Activated naive CD4-positive, alpha-beta T cell treated with anti-CD3 and anti-CD28 coated beads for 36 hours (primary cell): ENCODE measurements at regions of chr6 and their contacts with region 1.

Region 1: GRCh38 chr6:11172501-11173332 is 59.8 kb downstream of the NEDD9 start:
- DNase-seq: peak; percentile 84
- H3K4me3 Mint-ChIP-seq: no peak overlapping the region
- H3K27ac Mint-ChIP-seq: no peak overlapping the region
- H3K4me1 Mint-ChIP-seq: peaks cover 11% of the 10 kb centered on the region
- H3K27me3 Mint-ChIP-seq: no peaks in the 10 kb centered on the region

Region 2: DNA sequence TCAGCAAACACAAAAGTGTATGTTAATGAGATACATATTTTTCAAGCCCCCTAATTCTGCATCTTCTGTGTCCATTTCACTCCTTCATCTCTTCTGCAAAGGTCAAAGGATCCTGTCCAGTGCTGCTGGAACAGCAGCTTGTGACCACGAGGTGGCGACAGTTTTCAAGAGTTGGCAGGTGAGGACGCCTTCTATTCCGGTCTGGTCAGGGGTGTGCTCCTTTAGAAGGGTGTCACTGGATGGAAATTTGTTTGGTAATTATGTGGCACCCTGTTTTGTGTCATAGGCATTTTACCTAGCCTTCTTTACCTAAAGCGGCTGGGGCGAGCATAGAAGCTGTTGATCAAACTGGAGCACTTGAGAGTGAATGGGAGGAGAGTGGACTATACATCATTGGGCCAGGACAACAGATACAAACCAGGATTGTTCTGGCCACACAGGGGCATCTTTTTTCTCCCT is 28.3 kb before region 1 on chr6:
- CTCF ChIA-PET with region 1: interaction called, 5 read pairs
- intact Hi-C with region 1: loop called (anchors 1 kb)
- DNase-seq: peak; percentile 89
- H3K4me3 Mint-ChIP-seq: no peak overlapping the region
- H3K27ac Mint-ChIP-seq: no peak overlapping the region
- H3K4me1 Mint-ChIP-seq: peaks cover 7% of the 10 kb centered on the region
- H3K27me3 Mint-ChIP-seq: no peaks in the 10 kb centered on the region

Region 3: DNA sequence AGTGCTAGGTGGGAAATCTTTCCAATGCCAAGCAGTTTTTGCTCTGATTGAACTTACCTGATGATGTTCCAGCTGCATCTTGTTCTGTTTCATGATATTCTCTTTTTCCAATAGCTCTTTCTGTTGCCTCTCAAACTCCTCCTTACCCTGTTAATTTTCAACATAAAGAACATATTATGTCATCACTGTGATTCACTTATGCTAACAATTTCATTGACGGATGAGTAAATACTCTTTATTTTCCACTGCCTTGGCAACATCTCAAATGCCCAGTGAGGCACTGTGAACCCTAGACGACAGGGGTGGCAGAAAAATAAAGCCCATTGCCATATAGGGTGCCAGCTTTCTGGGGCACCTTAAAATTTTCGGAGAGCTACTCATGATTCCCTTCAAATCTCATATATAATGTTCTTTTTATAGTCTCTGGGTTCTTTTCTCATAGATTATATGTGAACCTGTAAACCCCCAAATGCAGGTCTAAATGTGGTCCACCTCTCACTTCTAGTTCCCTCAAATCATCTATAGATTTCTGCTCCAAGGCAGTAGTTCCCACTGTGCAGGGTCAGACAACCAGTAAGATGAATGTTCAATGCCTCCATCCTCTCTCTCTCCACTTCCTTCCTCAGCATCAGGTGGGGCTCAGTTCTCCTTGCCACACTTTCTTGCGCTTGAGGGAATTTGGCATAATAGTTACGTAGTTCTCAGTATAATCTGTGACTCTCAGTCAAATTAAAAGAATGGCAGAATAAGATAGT is 15.6 kb after region 1 on chr6:
- CTCF ChIA-PET with region 1: interaction called, 10 read pairs
- intact Hi-C with region 1: no loop called
- DNase-seq: no peak
- H3K4me3 Mint-ChIP-seq: no peak overlapping the region
- H3K27ac Mint-ChIP-seq: no peak overlapping the region
- H3K4me1 Mint-ChIP-seq: no peaks in the 10 kb centered on the region
- H3K27me3 Mint-ChIP-seq: no peaks in the 10 kb centered on the region

Region 4: DNA sequence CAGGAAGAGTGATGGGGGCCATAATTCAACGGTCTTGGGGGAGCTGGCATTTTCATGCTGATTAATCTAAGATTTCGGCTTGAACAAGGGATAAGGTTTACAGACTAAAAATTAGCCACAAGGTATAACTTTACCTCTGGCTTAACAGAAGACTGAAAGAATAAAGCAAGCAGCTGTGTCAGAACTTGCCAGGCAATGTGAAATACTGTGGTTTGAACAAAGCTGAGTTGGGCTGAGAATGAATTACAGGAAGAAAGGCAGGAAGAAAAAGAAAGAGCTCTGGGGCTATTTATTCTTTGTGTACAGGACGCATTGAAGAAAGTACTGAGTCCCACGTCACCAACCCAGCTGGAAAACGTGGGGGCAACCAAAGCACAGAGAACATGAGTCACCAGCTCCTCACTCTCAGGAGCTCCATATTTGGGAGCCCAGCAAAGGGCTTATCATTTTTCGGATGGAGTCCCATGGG is 181.2 kb after region 1 on chr6:
- CTCF ChIA-PET with region 1: no interaction called
- intact Hi-C with region 1: loop called (anchors 2 kb)
- DNase-seq: peak; percentile 93
- H3K4me3 Mint-ChIP-seq: peak overlapping the region; percentile 54
- H3K27ac Mint-ChIP-seq: peak overlapping the region; percentile 96
- H3K4me1 Mint-ChIP-seq: peaks cover 82% of the 10 kb centered on the region
- H3K27me3 Mint-ChIP-seq: no peaks in the 10 kb centered on the region

Region 5: GRCh38 chr6:11414176-11414963 is 241.7 kb after region 1 on chr6:
- CTCF ChIA-PET with region 1: interaction called, 3 read pairs
- intact Hi-C with region 1: loop called (anchors 1 kb)
- DNase-seq: peak; percentile 60
- H3K4me3 Mint-ChIP-seq: no peak overlapping the region
- H3K27ac Mint-ChIP-seq: no peak overlapping the region
- H3K4me1 Mint-ChIP-seq: peaks cover 33% of the 10 kb centered on the region
- H3K27me3 Mint-ChIP-seq: no peaks in the 10 kb centered on the region

Region 6: DNA sequence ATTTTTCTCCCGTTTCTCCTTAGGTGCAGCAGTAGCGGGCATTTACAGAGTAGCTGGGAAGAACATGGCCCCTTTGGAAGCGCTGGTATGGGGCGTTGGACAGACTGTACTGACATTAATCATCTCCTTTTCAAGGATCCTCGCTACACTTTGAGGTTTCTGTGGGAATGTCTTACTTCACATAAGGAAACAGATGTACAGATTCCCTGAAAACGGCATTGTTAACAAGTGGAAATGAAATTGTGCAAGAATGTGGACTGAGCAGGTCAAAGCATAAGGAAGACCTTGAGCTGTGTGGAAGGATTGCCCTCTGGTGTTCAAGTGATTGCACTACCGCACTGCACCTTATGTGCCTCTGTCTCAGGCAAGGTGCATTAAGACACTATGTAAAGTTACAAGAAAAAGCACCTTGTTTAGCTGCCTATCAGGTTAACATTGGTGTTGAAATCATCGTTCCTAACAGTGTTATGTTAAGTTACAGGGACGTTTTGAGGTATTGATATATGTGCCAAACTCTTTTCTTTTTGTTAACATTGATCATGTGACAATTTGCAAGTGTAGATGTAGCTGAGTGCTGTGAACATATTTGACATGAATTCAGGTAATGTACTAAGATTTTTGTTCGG is 402.8 kb after region 1 on chr6:
- CTCF ChIA-PET with region 1: interaction called, 3 read pairs
- intact Hi-C with region 1: loop called (anchors 1 kb)
- DNase-seq: peak; percentile 75
- H3K4me3 Mint-ChIP-seq: no peak overlapping the region
- H3K27ac Mint-ChIP-seq: no peak overlapping the region
- H3K4me1 Mint-ChIP-seq: no peaks in the 10 kb centered on the region
- H3K27me3 Mint-ChIP-seq: no peaks in the 10 kb centered on the region